Left cardiac atrium (tissue), 4 donors: ENCODE measurements at regions of chr2 and their contacts with region 1.

Region 1: DNA sequence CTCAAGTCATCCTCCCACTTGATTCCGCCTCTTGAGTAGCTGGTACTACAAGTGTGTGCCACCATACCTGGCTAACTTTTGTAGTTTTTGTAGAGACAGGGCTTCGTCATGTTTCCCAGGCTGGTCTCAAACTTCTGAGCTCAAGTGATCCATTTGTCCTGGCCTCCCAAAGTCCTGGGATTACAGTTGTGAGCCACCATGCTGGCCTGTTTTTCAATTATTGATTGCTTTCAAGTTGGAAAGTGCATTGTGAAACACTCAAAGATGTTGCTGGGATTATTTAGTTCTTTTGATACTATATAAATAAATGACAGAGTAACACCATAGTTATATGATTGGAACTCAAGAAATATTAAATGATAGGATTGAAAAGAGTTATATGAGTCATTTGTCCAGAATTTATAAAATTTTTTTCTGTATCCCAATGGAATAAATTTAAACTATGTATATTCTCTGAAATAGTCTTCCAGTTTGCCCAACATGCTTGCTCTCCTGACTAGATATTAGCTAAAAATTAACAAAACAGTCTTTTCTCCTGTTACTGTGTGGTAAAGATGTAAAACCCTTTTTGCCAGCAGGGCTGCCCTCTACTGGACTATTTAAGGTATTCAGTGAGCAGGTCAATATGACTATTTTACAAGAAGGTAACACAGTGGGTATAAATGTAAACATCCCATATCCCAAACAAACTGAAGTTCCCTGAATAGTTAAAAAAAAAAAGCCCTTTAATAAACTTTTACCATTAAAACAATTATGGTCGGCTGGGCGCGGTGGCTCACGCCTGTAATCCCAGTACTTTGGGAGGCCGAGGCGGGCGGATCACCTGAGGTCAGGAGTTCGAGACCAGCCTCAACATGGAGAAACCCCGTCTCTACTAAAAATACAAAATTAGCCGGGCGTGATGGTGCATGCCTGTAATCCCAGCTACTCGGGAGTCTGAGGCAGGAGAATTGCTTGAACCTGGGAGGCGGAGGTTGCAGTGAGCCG is 42.7 kb downstream of the ACSL3 start:
- DNase-seq: no peak
- ATAC-seq: peak; percentile 63 to 74

Region 2: DNA sequence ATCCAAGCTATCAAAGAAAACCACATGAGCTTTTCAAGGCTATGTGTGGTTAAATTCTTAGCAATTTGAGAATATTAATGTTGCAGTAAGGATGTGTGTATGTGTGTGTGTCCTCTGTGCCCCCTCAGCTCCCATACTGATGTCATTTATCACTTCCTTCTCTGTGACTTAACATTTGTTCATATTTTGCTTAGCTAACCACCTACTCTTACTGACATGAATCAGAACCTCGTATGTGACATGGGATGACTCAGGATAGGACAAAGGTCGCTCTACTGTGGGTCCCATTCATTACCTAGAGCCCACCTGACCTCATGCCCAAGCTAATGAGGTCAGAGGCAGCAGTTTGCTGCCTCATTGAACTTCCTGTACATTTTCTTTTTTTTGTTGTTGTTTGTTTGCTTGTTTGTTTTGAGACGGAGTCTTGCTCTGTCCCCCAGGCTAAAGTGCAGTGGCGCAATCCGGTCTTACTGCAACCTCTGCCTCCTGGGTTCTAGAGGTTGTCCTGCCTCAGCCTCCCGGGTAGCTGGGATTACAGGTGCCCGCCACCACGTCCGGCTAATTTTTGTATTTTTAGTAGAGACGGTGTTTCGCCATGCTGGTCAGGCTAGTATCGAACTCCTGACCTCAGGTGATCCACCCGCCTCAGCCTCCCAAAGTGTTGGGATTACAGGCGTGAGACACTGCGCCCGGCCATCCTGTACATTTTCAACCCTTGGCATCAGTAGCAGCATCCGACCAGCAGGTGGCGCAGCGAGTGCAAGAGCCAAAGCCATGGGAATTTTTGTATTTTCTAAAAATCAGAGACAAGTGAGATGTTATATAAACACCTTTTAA is 195.6 kb before region 1 on chr2:
- intact Hi-C with region 1: loop called (anchors 1 to 10 kb)
- DNase-seq: peak; percentile 83
- ATAC-seq: peak; percentile 53 to 61

Region 3: GRCh38 chr2:222743251-222743812 is 160.2 kb before region 1 on chr2:
- intact Hi-C with region 1: no loop called
- DNase-seq: peak; percentile 32
- ATAC-seq: peak; percentile 57 to 62

Region 4: GRCh38 chr2:222797261-222797660 is 106.3 kb before region 1 on chr2:
- intact Hi-C with region 1: loop called in 1 of 2 experiments (anchors 2 kb)
- DNase-seq: no peak
- ATAC-seq: peak in 1 of 2 donors; percentile 24

Region 5: GRCh38 chr2:222866358-222866960 is 37.1 kb before region 1 on chr2:
- intact Hi-C with region 1: loop called in 1 of 2 experiments (anchors 5 kb)
- DNase-seq: no peak
- ATAC-seq: no peak

Region 6: GRCh38 chr2:223008162-223008561 is 104.6 kb after region 1 on chr2:
- intact Hi-C with region 1: no loop called
- DNase-seq: peak; percentile 20
- ATAC-seq: peak in 1 of 2 donors; percentile 30